AG04450 (cell line): ENCODE measurements at regions of chr3 and their contacts with region 1.

Region 1: GRCh38 chr3:194315088-194315964 is 35.8 kb downstream of the CPN2 start:
- DNase-seq: no peak
- H3K4me3 ChIP-seq: peak overlapping the region; percentile 59
- H3K27ac ChIP-seq: no peak overlapping the region
- H3K27me3 ChIP-seq: peaks cover 48% of the 10 kb centered on the region
- CTCF ChIP-seq: peak; percentile 92

Region 2: GRCh38 chr3:193665370-193665989 is 649.8 kb before region 1 on chr3:
- CTCF ChIA-PET with region 1: interaction called, 89 read pairs
- POLR2A ChIA-PET with region 1: no interaction called
- DNase-seq: peak; percentile 4
- H3K4me3 ChIP-seq: no peak overlapping the region
- H3K27ac ChIP-seq: no peak overlapping the region
- H3K27me3 ChIP-seq: no peaks in the 10 kb centered on the region
- CTCF ChIP-seq: peak; percentile 50

Region 3: DNA sequence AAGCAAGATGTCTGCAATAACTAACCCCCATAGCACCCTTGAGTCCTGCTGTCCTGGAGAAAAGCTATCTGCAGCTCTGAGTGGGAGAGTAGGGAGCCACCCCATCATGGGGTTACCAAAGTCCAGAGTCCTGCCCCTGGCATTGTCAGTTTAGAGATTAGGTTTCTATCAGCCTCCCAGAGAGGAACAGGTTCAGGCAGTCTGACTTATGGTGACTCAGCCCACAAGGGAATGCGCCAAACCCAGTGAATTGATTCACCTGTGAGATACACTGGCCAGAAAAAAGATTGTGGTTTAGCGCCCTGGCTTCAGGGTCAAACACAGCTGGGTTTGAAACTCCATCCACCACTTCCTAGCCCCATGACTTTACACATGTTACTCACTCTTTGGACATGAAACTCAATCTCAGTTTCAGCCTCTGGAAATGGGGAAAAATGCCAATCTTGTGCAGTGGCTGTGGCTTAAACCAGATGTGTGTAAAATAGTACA is 443.0 kb before region 1 on chr3:
- CTCF ChIA-PET with region 1: interaction called, 11 read pairs
- POLR2A ChIA-PET with region 1: no interaction called
- DNase-seq: peak; percentile 94
- H3K4me3 ChIP-seq: no peak overlapping the region
- H3K27ac ChIP-seq: no peak overlapping the region
- H3K27me3 ChIP-seq: peaks cover 7% of the 10 kb centered on the region
- CTCF ChIP-seq: no peak

Region 4: GRCh38 chr3:194134757-194135528 is 180.4 kb before region 1 on chr3:
- CTCF ChIA-PET with region 1: interaction called, 25 read pairs
- POLR2A ChIA-PET with region 1: interaction called, 10 read pairs
- DNase-seq: peak; percentile 85
- H3K4me3 ChIP-seq: peak overlapping the region; percentile 61
- H3K27ac ChIP-seq: peak overlapping the region; percentile 95
- H3K27me3 ChIP-seq: peaks cover 28% of the 10 kb centered on the region
- CTCF ChIP-seq: no peak

Region 5: DNA sequence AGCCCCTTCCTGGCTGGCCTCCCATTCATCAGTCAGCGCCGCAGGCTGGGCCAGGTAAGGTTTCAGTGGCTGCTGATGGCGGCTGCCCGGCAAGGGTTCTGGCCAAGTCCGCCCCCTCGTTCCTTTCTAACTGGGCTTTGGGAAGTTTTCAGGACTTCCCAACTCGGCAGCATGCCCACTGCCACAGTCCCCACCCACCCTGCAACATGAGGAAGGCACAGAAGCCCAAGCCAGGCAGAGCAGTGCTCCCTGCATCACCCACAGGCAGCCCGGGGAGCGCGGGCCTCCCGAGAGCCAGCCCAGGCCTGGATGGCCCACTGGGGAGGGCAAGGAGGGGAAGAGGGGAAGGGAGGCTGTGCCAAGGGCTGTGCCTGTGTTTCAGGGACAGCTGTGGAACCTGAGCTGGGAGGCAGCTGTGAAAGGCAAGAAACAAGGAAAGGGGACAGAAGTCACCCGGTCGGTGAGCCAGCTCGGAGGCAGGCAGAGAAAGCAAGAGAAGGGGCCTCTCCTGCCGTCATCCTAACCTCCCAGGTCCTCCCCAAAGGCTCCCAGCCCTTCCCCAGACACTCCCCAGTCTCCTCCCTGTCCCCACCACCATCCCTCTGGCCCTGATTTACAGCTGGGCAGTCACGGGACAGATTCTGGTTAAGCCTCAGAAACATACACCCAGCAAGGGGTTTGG is 38.1 kb before region 1 on chr3:
- CTCF ChIA-PET with region 1: interaction called, 20 read pairs
- POLR2A ChIA-PET with region 1: no interaction called
- DNase-seq: no peak
- H3K4me3 ChIP-seq: no peak overlapping the region
- H3K27ac ChIP-seq: peak overlapping the region; percentile 73
- H3K27me3 ChIP-seq: peaks cover 9% of the 10 kb centered on the region
- CTCF ChIP-seq: no peak

Region 6: DNA sequence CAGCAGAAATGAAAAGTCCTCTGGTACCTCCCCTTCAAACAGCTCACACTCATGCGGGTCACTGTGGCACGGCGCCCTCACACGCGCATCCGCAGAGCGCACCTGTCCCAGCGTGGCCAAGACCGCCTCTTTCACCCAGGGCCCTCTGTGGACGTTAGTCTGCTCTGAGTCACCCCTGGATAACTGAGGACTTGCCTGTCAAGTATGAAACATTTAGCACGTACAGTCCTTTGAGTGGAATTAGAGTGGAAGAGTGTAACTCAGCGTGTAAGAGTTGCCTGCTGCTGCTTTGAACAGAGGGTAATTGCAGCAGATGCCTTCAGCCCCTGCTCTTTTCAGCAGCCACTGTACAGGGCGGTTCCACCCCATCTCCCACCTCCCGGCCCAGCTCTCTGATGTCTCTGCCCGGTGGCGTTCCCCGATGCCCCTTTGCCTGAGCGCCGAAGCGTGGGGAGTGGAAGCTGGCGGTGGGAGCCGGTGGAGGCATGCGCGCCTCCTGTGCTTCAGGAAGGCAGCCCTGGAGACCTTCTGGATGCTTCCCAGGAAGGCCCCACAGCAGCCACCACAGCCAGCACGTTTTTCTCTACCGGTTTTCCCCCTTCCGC is 12.8 kb after region 1 on chr3:
- CTCF ChIA-PET with region 1: interaction called, 19 read pairs
- POLR2A ChIA-PET with region 1: no interaction called
- DNase-seq: no peak
- H3K4me3 ChIP-seq: no peak overlapping the region
- H3K27ac ChIP-seq: no peak overlapping the region
- H3K27me3 ChIP-seq: no peaks in the 10 kb centered on the region
- CTCF ChIP-seq: no peak